ENCODE measurements at regions of chr9 and their contacts with region 1.

Region 1: DNA sequence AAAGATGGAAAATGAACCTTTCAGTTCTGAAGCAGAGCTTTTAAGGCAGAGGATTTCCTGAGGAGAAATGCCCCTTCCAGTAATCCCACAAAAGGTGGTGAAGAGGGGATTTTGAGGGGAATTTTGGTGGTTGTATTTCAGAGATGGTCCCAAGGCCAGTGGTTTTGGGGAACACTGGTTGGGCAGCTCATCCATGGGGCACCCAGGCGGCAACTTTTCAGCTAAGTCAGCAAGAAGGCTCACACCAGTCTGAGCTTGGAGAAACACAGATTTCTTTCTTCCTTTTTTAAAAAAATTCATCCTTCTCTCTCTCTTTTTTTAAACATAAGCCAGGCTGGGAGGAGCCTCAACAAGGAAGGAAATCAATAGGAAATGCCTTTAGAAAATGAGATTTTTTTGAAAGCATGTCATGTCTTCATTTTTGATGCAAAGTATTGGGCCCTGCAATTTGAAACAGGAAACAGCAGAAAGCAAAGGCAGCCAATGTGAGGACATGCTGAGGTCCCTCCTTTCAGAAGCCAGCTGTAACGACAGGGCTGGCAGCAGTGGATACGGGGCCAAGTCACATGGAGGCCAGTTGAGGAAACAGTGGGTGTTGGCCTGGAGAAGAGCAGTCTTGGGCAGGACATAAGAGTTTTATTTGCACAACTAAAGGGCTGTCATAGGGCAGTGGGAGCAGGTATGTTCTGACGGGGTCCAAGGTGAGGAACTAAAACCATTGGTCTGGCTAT is 155.3 kb upstream of the KLF4 start:
- DNase-seq: peak; percentile 64 to 74 (median 70)
- ATAC-seq: peak; percentile 78 to 91 (median 87)
- H3K4me3 ChIP-seq: no peak overlapping the region
- H3K27ac ChIP-seq: peak overlapping the region in 10 of 12 donors; percentile 8 to 79 (median 56)
- H3K4me1 ChIP-seq: peaks cover 0 to 21% (median 13%) of the 10 kb centered on the region in 12 donors
- H3K27me3 ChIP-seq: no peaks in the 10 kb centered on the region
- CTCF ChIP-seq: no peak
- POLR2A ChIP-seq: no peak

Region 2: DNA sequence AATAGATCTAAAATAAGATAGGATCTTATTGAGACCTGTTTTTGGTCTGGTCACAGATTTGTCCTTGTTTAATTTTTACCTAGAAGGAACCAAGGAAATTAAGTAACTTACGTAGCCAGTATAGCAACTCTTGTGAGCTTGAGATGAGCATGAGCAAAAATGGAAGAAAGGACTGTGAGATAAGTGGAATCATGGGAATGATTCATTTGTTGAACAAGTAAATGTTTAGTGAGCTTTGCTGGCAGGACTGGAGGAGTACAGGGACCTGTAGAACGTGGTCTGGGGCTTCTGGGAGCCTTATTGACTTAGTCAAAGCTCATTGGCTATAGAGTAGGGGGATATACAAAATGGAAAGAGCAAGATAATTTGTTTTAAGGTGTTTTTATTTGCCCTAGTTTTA is 358.9 kb before region 1 on chr9:
- intact Hi-C with region 1: no loop called
- DNase-seq: no peak
- ATAC-seq: no peak
- H3K4me3 ChIP-seq: peak overlapping the region in 9 of 12 donors; percentile 72 to 98 (median 87)
- H3K27ac ChIP-seq: peak overlapping the region in 2 of 12 donors; percentile 99 to 100
- H3K4me1 ChIP-seq: peaks cover 0 to 70% (median 42%) of the 10 kb centered on the region in 12 donors
- H3K27me3 ChIP-seq: no peaks in the 10 kb centered on the region
- CTCF ChIP-seq: no peak
- POLR2A ChIP-seq: no peak

Region 3: DNA sequence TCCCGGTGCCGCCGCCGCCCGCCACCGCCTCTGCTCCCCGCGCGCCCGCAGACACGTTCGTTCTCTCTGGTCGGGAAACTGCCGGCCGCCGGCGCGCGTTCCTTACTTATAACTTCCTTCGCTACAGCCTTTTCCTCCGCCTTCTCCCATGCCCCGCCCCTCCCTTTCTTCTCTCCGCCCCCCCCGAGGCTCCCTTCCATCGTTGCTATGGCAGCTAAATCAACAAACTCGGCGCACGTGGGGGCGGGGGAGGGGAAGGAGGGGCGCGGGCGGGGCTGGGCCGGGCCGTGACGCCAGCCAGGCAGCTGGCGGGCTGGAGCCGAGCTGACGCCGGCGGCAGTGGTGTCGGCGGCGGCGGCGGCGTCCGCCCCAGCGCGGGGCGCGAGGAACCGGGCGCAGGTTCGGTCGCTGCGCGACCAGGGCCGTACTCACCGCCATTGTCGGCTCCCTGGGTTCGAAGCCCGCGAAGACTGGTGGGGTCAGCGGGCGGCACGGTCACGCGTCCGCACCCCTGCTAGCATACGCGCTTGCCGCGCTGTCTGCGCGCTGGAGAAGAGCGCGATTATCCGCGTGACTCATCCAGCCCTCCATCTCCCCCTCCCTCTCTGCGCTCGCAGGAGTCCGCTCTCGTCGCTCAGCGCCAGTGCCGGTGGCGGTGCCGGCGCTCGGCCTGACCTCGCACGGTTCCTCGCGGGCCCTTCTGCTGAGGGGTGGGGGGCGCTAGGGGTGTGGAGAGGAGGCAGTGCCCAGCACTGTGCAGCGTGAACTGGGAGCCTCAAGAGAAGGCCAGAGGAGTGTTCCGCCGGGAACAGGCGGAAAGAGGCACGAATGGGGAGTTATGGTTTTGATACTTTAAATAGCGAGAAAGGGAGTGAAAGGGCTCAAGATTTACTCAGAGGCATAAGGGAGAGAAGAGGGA is 155.0 kb before region 1 on chr9 and contains the start of gene KLF4:
- intact Hi-C with region 1: no loop called
- DNase-seq: peak; percentile 92 to 94 (median 93)
- ATAC-seq: peak; percentile 71 to 91 (median 83)
- H3K4me3 ChIP-seq: peak within 1 kb of the TSS; percentile 64 to 92 (median 81)
- H3K27ac ChIP-seq: peak within 1 kb of the TSS; percentile 90 to 99 (median 95)
- H3K4me1 ChIP-seq: peaks cover 0 to 47% (median 15%) of the 10 kb centered on the region in 12 donors
- H3K27me3 ChIP-seq: peaks cover 0 to 16% (median 0%) of the 10 kb centered on the region in 9 donors
- CTCF ChIP-seq: peak in 1 of 12 donors; percentile 3
- POLR2A ChIP-seq: peak in 1 of 2 donors; percentile 92
- total RNA-seq, gene KLF4: 17.1 to 63.3 (median 21.3) TPM

Region 4: DNA sequence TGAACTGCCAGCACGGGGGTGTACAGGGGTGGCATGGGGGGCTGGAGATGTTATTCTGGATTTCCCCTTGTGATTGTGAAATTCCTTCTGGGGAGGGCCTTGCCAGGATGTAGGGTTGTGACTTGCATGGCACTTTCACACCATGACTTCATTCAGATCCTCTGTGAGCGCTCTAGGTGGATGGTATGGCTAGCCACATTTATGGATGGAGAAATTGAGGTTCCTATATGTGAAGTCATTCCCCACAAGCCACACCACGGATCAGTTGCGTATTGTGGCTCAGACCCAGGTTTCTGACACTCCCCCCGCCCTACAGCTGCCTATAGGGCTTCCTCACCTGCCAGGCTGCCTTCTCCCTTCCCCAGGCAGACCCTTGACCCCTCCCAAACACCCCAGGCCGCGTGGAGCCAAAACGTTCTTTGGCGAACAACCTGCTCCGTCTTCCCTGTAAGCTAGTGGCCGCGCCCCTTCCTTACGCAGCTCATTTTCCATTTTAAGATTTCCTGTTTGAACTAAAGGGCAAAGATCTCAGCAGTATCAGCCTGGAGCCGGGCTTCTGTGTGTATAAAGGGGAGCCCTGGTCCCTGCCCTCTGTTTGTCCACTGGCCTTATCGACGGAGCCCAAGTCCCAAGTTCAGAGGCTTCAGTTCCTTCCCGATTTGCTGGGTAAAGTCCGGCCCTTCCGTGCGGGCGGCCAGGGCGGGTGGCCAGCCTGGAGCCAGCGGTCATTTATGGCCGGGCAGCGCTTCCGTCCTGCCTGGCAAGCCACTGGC is 57.5 kb before region 1 on chr9:
- intact Hi-C with region 1: loop called in 1 of 10 experiments (anchors 10 kb)
- DNase-seq: peak; percentile 65 to 77 (median 75)
- ATAC-seq: peak; percentile 85 to 94 (median 86)
- H3K4me3 ChIP-seq: peak overlapping the region in 10 of 12 donors; percentile 10 to 49 (median 34)
- H3K27ac ChIP-seq: peak overlapping the region; percentile 66 to 91 (median 85)
- H3K4me1 ChIP-seq: peaks cover 0 to 24% (median 10%) of the 10 kb centered on the region in 12 donors
- H3K27me3 ChIP-seq: no peaks in the 10 kb centered on the region
- CTCF ChIP-seq: no peak
- POLR2A ChIP-seq: peak in 1 of 2 donors; percentile 14

Region 5: GRCh38 chr9:107705521-107705920 is 60.6 kb after region 1 on chr9:
- intact Hi-C with region 1: no loop called
- DNase-seq: no peak
- ATAC-seq: no peak
- H3K4me3 ChIP-seq: no peak overlapping the region
- H3K27ac ChIP-seq: no peak overlapping the region
- H3K4me1 ChIP-seq: peaks cover 0 to 25% (median 11%) of the 10 kb centered on the region in 12 donors
- H3K27me3 ChIP-seq: no peaks in the 10 kb centered on the region
- CTCF ChIP-seq: no peak
- POLR2A ChIP-seq: no peak

Region 6: GRCh38 chr9:107760454-107761237 is 115.7 kb after region 1 on chr9:
- intact Hi-C with region 1: loop called in 2 of 10 experiments (anchors 10 kb)
- DNase-seq: peak; percentile 53 to 77 (median 66)
- ATAC-seq: peak; percentile 88 to 93 (median 90)
- H3K4me3 ChIP-seq: no peak overlapping the region
- H3K27ac ChIP-seq: peak overlapping the region in 10 of 12 donors; percentile 7 to 85 (median 42)
- H3K4me1 ChIP-seq: peaks cover 0 to 46% (median 6%) of the 10 kb centered on the region in 12 donors
- H3K27me3 ChIP-seq: no peaks in the 10 kb centered on the region
- CTCF ChIP-seq: no peak
- POLR2A ChIP-seq: no peak

Region 7: GRCh38 chr9:108142504-108143201 is 497.8 kb after region 1 on chr9:
- intact Hi-C with region 1: loop called in 1 of 10 experiments (anchors 10 kb)
- DNase-seq: peak; percentile 76 to 85 (median 80)
- ATAC-seq: peak; percentile 98 to 99 (median 98)
- H3K4me3 ChIP-seq: no peak overlapping the region
- H3K27ac ChIP-seq: peak overlapping the region; percentile 53 to 91 (median 80)
- H3K4me1 ChIP-seq: peaks cover 0 to 25% (median 16%) of the 10 kb centered on the region in 12 donors
- H3K27me3 ChIP-seq: no peaks in the 10 kb centered on the region
- CTCF ChIP-seq: no peak
- POLR2A ChIP-seq: peak in 1 of 2 donors; percentile 5

Region 8: GRCh38 chr9:108150736-108151586 is 506.1 kb after region 1 on chr9:
- intact Hi-C with region 1: loop called in 2 of 10 experiments (anchors 10 kb)
- DNase-seq: peak; percentile 20 to 63 (median 43)
- ATAC-seq: peak; percentile 92 to 97 (median 96)
- H3K4me3 ChIP-seq: no peak overlapping the region
- H3K27ac ChIP-seq: peak overlapping the region; percentile 32 to 82 (median 66)
- H3K4me1 ChIP-seq: peaks cover 0 to 26% (median 13%) of the 10 kb centered on the region in 12 donors
- H3K27me3 ChIP-seq: no peaks in the 10 kb centered on the region
- CTCF ChIP-seq: no peak
- POLR2A ChIP-seq: no peak

Measured in heart left ventricle (tissue), 16 donors.